Right ventricle myocardium superior (tissue), 1 donor: ENCODE measurements at regions of chr10 and their contacts with region 1.

Region 1: GRCh38 chr10:100346765-100347567 is at the start of gene SCD:
- DNase-seq: peak; percentile 87
- ATAC-seq: peak; percentile 90
- total RNA-seq, gene SCD: 21.2 TPM

Region 2: GRCh38 chr10:100433253-100434240 is 86.6 kb after region 1 on chr10:
- intact Hi-C with region 1: loop called (anchors 2 kb)
- DNase-seq: peak; percentile 91
- ATAC-seq: peak; percentile 97

Region 3: GRCh38 chr10:100518761-100519241 is 171.8 kb after region 1 on chr10:
- intact Hi-C with region 1: loop called (anchors 10 kb)
- DNase-seq: peak; percentile 50
- ATAC-seq: peak; percentile 80